Dorsolateral prefrontal cortex (tissue), 120 donors: ENCODE measurements at regions of chr17 and their contacts with region 1.

Region 1: GRCh38 chr17:44123356-44124117 is at the start of gene HDAC5:
- DNase-seq: peak; percentile 94 to 97 (median 97)
- H3K4me3 ChIP-seq: peak within 1 kb of the TSS; percentile 78 to 100 (median 98)
- H3K27ac ChIP-seq: peak within 1 kb of the TSS; percentile 88 to 99 (median 98)
- H3K27me3 ChIP-seq: no peaks in the 10 kb centered on the region
- CTCF ChIP-seq: peak; percentile 44 to 82 (median 70)
- total RNA-seq, gene HDAC5: 70.3 to 155 (median 110) TPM

Region 2: GRCh38 chr17:44105483-44105882 is 18.1 kb before region 1 on chr17:
- intact Hi-C with region 1: loop called in 1 of 2 experiments (anchors 2 kb)
- DNase-seq: no peak
- H3K4me3 ChIP-seq: no peak overlapping the region
- H3K27ac ChIP-seq: peak overlapping the region in 46 of 59 donors; percentile 5 to 92 (median 80)
- H3K27me3 ChIP-seq: no peaks in the 10 kb centered on the region
- CTCF ChIP-seq: no peak

Region 3: GRCh38 chr17:44110823-44111633 is 12.5 kb before region 1 on chr17:
- intact Hi-C with region 1: loop called (anchors 1 kb)
- DNase-seq: peak; percentile 85 to 99 (median 97)
- H3K4me3 ChIP-seq: peak overlapping the region; percentile 23 to 72 (median 53)
- H3K27ac ChIP-seq: peak overlapping the region; percentile 72 to 98 (median 92)
- H3K27me3 ChIP-seq: no peaks in the 10 kb centered on the region
- CTCF ChIP-seq: peak in 28 of 56 donors; percentile 8 to 58 (median 34)

Region 4: GRCh38 chr17:44141717-44142285 is 18.3 kb after region 1 on chr17 and contains the start of gene HROB:
- intact Hi-C with region 1: loop called in 1 of 2 experiments (anchors 1 kb)
- DNase-seq: peak; percentile 95 to 98 (median 96)
- H3K4me3 ChIP-seq: peak within 1 kb of the TSS; percentile 49 to 96 (median 74)
- H3K27ac ChIP-seq: peak within 1 kb of the TSS in 3 of 59 donors; percentile 15 to 66 (median 63)
- H3K27me3 ChIP-seq: no peaks in the 10 kb centered on the region
- CTCF ChIP-seq: peak; percentile 57 to 98 (median 92)
- total RNA-seq, gene HROB: 0.19 to 2.8 (median 0.78) TPM in 109 of 120 experiments, not detected in the others

Region 5: GRCh38 chr17:44186307-44187130 is 63.0 kb after region 1 on chr17 and contains the start of gene TMUB2:
- intact Hi-C with region 1: loop called in 1 of 2 experiments (anchors 5 kb)
- DNase-seq: peak; percentile 99 to 100 (median 99)
- H3K4me3 ChIP-seq: peak within 1 kb of the TSS; percentile 68 to 100 (median 94)
- H3K27ac ChIP-seq: peak within 1 kb of the TSS; percentile 69 to 100 (median 98)
- H3K27me3 ChIP-seq: no peaks in the 10 kb centered on the region
- CTCF ChIP-seq: peak in 26 of 56 donors; percentile 1 to 55 (median 23)
- total RNA-seq, gene TMUB2: 25.4 to 51.8 (median 37.8) TPM